ENCODE measurements at regions of chr12 and their contacts with region 1.

Region 1: GRCh38 chr12:10364815-10365622 is 24.8 kb downstream of the KLRK1 start:
- DNase-seq: peak in 4 of 5 donors; percentile 58 to 73 (median 68)
- ATAC-seq: peak; percentile 82 to 91 (median 87)
- H3K4me3 ChIP-seq: peak overlapping the region; percentile 57 to 92 (median 66)
- H3K27ac ChIP-seq: peak overlapping the region; percentile 79 to 97 (median 91)
- H3K4me1 ChIP-seq: peaks cover 0 to 64% (median 14%) of the 10 kb centered on the region in 12 donors
- H3K27me3 ChIP-seq: no peaks in the 10 kb centered on the region
- CTCF ChIP-seq: no peak
- POLR2A ChIP-seq: no peak

Region 2: GRCh38 chr12:10235761-10236631 is 129.0 kb before region 1 on chr12:
- intact Hi-C with region 1: loop called in 1 of 10 experiments (anchors 10 kb)
- DNase-seq: peak in 1 of 5 donors; percentile 35
- ATAC-seq: peak; percentile 54 to 84 (median 81)
- H3K4me3 ChIP-seq: no peak overlapping the region
- H3K27ac ChIP-seq: no peak overlapping the region
- H3K4me1 ChIP-seq: peaks cover 0 to 7% (median 0%) of the 10 kb centered on the region in 12 donors
- H3K27me3 ChIP-seq: no peaks in the 10 kb centered on the region
- CTCF ChIP-seq: peak; percentile 73 to 91 (median 86)
- POLR2A ChIP-seq: no peak